Activated T-helper 1 cell treated with anti-CD3 and anti-CD28 coated beads, Interleukin-12 subunit alpha, Interleukin-12 subunit beta, Interleukin-2, Interleukin-4 antibody, amounts not matched to agents 30 ng/mL and 10 ng/mL and 1 ng/mL, durations not matched to agents 14 hours and 24 hours and 36 hours (primary cell): ENCODE measurements at regions of chr13 and their contacts with region 1.

Region 1: DNA sequence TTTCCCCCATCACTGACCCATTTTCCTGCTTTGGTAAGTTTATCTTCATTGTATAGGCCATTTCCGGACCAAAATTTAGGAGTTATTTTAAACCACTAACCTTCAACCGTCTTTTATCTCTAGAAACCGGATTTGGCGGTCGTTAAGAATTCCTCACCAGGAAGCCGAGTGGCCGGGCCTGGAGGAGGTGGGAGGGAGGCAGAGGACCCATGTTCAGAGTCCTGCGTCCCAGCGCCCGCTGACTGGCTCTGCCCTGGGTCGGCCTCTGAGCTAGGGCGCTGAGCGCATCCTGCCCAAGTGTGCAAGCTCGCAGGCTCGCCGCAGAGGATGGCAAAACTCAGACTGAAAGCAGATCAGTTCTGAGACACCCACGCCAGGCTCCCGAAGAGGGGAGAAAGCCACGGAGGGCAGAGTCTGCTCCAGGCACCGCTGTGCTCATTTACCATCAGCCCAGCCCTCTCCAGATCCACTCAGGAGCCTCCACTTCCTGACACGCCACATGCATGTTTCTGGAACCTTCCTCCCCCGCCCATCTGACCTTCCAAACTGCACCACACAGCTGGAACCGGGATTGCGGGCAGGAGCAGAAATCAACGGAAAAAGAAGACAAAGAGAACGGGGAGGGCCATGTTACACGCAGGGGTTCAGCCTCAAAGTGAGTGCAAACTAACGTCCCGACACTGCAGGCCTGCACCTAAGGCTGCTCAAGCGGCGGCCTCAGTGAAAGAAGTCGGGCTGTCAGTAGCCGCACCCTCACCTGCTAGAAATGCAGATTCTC is 8.3 kb downstream of the COL4A1 start:
- DNase-seq: peak; percentile 16
- H3K4me3 Mint-ChIP-seq: peak overlapping the region; percentile 38
- H3K27ac Mint-ChIP-seq: no peak overlapping the region
- H3K4me1 Mint-ChIP-seq: peaks cover 9% of the 10 kb centered on the region
- H3K27me3 Mint-ChIP-seq: peaks cover 34% of the 10 kb centered on the region

Region 2: DNA sequence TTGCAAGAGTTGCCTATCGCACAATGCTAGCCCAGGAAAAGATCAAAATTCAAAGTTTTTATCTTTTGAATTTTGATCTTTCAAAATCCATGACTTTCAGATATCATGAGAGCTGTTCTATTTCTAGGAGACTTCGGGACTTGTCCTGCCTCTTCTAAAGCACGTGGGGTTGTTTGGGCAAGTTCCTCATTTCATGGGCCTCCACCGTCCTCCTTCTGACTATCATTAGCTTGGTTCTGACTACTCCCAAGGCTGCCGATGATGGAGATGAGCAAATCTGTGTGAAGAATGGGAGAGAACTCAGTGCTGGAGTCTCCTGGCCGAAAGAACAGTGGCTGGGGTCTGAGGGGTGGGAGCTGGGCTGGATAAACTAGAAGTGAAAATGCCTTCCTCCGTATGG is 78.2 kb before region 1 on chr13:
- intact Hi-C with region 1: loop called (anchors 5 kb)
- DNase-seq: no peak
- H3K4me3 Mint-ChIP-seq: no peak overlapping the region
- H3K27ac Mint-ChIP-seq: no peak overlapping the region
- H3K4me1 Mint-ChIP-seq: no peaks in the 10 kb centered on the region
- H3K27me3 Mint-ChIP-seq: peaks cover 25% of the 10 kb centered on the region